Caco-2 (cell line): ENCODE measurements at regions of chr14 and their contacts with region 1.

Region 1: DNA sequence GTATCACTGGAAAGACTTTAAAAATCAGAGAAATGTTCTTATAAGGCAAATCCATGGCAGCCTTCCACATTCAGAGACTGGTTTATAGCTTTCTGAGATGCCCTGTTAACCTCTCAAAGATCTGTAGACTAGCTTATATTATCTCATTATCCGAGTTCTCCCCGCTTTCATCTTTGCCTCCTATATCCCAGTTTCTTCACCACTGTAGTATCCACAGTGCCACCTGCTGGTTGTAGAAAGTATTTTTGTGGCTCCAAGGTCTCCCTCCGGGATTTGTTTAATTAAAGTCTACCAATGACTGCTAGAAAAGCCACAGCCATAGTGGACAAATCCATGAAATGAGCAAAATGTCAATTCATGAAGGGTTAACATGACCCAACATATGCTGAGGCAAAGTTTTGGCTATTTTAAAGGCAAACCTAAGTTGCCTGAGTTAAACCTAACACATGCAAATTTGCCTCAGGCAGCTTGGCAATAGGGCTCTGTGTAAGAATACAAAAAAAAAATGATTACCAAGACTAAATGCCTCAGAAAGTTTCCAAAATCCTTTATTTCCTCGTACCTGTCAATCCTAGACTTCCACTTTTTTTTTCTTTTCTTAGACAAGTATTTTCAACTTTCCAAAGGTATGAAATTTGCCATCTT is 218.8 kb upstream of the BMP4 start:
- DNase-seq: peak; percentile 76 to 83
- H3K4me3 ChIP-seq: no peak overlapping the region
- H3K4me3 Mint-ChIP-seq: no peak overlapping the region
- H3K27ac Mint-ChIP-seq: no peak overlapping the region
- H3K4me1 ChIP-seq: peaks cover 47% of the 10 kb centered on the region
- H3K4me1 Mint-ChIP-seq: peaks cover 33% of the 10 kb centered on the region
- H3K27me3 ChIP-seq: no peaks in the 10 kb centered on the region
- H3K27me3 Mint-ChIP-seq: no peaks in the 10 kb centered on the region
- CTCF ChIP-seq: peak; percentile 72 to 78

Region 2: GRCh38 chr14:53929871-53930715 is 245.3 kb before region 1 on chr14:
- CTCF ChIA-PET with region 1: interaction called, 16 read pairs
- POLR2A ChIA-PET with region 1: no interaction called
- intact Hi-C with region 1: loop called (anchors 1 kb)
- DNase-seq: peak; percentile 82 to 84
- H3K4me3 ChIP-seq: no peak overlapping the region
- H3K4me3 Mint-ChIP-seq: no peak overlapping the region
- H3K27ac Mint-ChIP-seq: peak overlapping the region; percentile 68
- H3K4me1 ChIP-seq: peaks cover 39% of the 10 kb centered on the region
- H3K4me1 Mint-ChIP-seq: peaks cover 37% of the 10 kb centered on the region
- H3K27me3 ChIP-seq: no peaks in the 10 kb centered on the region
- H3K27me3 Mint-ChIP-seq: no peaks in the 10 kb centered on the region
- CTCF ChIP-seq: peak; percentile 93 to 98

Region 3: DNA sequence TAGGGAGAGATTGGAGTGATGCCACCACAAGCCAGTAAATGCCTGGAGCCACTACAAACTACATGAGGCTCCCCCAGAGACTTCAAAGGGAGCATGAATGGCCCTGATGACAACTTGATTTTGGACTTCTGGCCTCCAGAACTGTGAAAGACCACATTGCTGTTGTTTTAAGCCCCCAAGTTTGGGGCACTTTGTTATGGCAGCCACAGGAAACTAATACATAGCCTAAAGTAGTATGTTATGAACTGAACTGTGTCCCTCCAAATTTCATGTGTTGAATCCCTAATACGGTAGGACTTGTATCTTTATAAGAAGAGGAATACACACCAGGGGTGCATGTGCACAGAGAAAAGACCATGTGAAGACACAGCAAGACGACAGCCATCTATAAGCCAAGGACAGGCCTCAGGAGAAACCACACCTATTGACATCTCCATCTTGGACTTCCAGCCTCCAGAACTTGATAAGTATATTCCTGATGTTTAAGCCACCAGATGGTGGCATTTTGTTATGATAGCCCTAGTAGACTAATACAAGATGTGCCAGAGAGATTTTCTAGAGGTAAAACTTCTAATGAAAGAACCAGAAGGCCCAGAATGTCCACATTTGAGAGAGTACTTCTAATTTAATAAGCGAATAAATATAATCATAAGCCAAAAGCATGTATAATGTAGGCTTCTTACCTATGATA is 91.7 kb before region 1 on chr14:
- CTCF ChIA-PET with region 1: interaction called, 3 read pairs
- POLR2A ChIA-PET with region 1: no interaction called
- intact Hi-C with region 1: loop called (anchors 1 kb)
- DNase-seq: no peak
- H3K4me3 ChIP-seq: no peak overlapping the region
- H3K4me3 Mint-ChIP-seq: no peak overlapping the region
- H3K27ac Mint-ChIP-seq: no peak overlapping the region
- H3K4me1 ChIP-seq: peaks cover 8% of the 10 kb centered on the region; the same call in 1 of the 2 replicates
- H3K4me1 Mint-ChIP-seq: no peaks in the 10 kb centered on the region
- H3K27me3 ChIP-seq: no peaks in the 10 kb centered on the region
- H3K27me3 Mint-ChIP-seq: no peaks in the 10 kb centered on the region
- CTCF ChIP-seq: no peak

Region 4: DNA sequence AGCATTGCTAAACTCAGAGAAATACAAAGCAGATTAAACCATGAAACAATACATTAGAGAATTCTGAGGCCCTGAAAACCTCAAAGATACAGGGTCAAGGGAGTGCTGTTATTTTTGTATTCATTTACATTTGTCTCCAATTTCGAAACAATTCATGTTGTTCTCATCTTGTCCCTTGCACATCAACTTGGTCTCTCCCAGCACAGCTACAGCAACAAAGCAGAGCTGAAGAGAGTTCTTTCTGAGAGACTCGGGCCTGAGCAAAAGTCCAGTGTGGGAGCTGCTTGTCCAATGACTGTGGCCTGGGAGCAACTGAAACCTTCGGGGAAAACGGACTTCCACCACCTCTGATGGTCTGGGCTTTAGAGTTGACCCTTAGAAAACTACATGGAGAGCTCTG is 142.0 kb after region 1 on chr14:
- CTCF ChIA-PET with region 1: no interaction called
- POLR2A ChIA-PET with region 1: no interaction called
- intact Hi-C with region 1: no loop called
- DNase-seq: no peak
- H3K4me3 ChIP-seq: no peak overlapping the region
- H3K4me3 Mint-ChIP-seq: no peak overlapping the region
- H3K27ac Mint-ChIP-seq: no peak overlapping the region
- H3K4me1 ChIP-seq: no peaks in the 10 kb centered on the region
- H3K4me1 Mint-ChIP-seq: no peaks in the 10 kb centered on the region
- H3K27me3 ChIP-seq: no peaks in the 10 kb centered on the region
- H3K27me3 Mint-ChIP-seq: no peaks in the 10 kb centered on the region
- CTCF ChIP-seq: no peak

Region 5: DNA sequence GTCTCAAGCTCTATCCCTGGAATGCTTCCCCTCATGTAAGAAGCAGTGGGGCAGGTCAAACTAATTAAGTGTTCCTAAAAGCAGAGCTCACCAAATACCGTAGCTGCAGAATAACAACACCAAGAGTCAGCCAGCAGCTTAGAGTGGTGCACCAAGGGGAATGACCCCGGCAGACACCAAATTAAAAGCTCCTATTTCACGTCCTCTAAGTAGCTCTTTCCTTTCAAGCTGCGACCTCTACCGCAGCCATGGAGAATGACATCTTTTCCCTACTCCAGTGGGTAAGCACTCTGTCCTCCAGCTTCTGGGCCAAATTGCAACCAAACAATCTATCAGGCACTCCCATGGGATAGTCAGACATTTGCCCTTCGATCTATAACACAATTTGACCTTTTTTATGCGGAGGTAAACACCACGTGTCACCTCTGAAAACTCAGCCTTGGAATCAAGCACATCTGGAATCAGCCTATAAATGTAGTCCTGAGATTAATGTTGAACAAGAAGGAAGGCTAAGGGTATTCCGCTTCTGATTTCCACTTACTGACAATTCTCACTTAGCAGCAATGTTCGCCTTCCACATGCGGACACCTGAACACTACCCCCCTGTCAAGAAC is 153.8 kb after region 1 on chr14:
- CTCF ChIA-PET with region 1: interaction called, 11 read pairs
- POLR2A ChIA-PET with region 1: no interaction called
- intact Hi-C with region 1: loop called (anchors 2 kb)
- DNase-seq: peak; percentile 51 to 53
- H3K4me3 ChIP-seq: no peak overlapping the region
- H3K4me3 Mint-ChIP-seq: no peak overlapping the region
- H3K27ac Mint-ChIP-seq: no peak overlapping the region
- H3K4me1 ChIP-seq: no peaks in the 10 kb centered on the region
- H3K4me1 Mint-ChIP-seq: peaks cover 5% of the 10 kb centered on the region
- H3K27me3 ChIP-seq: no peaks in the 10 kb centered on the region
- H3K27me3 Mint-ChIP-seq: no peaks in the 10 kb centered on the region
- CTCF ChIP-seq: peak; percentile 70 to 76